ENCODE measurements at regions of chr11 and their contacts with region 1.

Region 1: GRCh38 chr11:73478738-73479347 is 102.6 kb downstream of the RELT start:
- DNase-seq: peak; percentile 26 to 54
- H3K4me3 ChIP-seq: no peak overlapping the region
- H3K27ac ChIP-seq: no peak overlapping the region
- H3K4me1 ChIP-seq: 0 out of 2 replicates have a peak, but pooled peaks cover 6% of the 10 kb centered on the region
- H3K27me3 ChIP-seq: no peaks in the 10 kb centered on the region
- CTCF ChIP-seq: peak; percentile 85

Region 2: GRCh38 chr11:73439002-73439843 is 39.6 kb before region 1 on chr11:
- CTCF ChIA-PET with region 1: interaction called, 10 read pairs
- POLR2A ChIA-PET with region 1: no interaction called
- intact Hi-C with region 1: no loop called
- DNase-seq: no peak
- H3K4me3 ChIP-seq: no peak overlapping the region
- H3K27ac ChIP-seq: no peak overlapping the region
- H3K4me1 ChIP-seq: no peaks in the 10 kb centered on the region
- H3K27me3 ChIP-seq: no peaks in the 10 kb centered on the region
- CTCF ChIP-seq: no peak

Region 3: GRCh38 chr11:73458201-73458600 is 20.6 kb before region 1 on chr11:
- CTCF ChIA-PET with region 1: interaction called, 20 read pairs
- POLR2A ChIA-PET with region 1: no interaction called
- intact Hi-C with region 1: no loop called
- DNase-seq: no peak
- H3K4me3 ChIP-seq: no peak overlapping the region
- H3K27ac ChIP-seq: no peak overlapping the region
- H3K4me1 ChIP-seq: no peaks in the 10 kb centered on the region
- H3K27me3 ChIP-seq: no peaks in the 10 kb centered on the region
- CTCF ChIP-seq: no peak

Region 4: DNA sequence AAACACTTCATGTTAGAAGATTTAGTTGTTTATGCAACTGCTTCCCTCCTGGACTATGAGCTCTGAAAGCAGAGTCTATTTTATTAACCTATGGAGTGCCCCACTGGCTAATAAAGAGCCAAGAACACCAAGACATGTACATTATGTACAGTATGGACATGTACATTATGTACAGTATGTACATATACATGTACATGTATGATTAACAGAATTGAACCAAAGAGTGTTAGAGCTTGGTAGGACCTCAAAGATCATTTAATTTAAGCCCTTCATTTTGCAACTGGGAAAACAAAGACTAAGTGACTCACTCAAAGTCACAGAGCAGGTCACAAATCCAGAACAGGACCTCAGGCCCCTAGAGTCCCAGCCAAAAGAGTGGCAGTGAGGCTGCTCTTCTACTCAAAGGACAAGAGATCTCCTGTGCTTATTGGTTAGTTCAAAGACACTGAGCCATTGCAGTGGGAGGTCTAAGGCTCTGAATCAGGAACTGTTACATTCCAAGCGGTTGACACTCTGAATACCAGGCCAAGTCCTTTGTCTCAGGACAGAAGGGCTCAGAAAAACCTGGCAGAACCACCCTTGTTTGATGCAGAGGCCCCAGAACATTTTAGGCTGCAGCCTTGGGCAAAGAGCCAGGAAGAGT is 15.2 kb after region 1 on chr11:
- CTCF ChIA-PET with region 1: interaction called, 9 read pairs
- POLR2A ChIA-PET with region 1: interaction called, 4 read pairs
- intact Hi-C with region 1: loop called (anchors 1 kb)
- DNase-seq: peak; percentile 81 to 96
- H3K4me3 ChIP-seq: no peak overlapping the region
- H3K27ac ChIP-seq: 0 out of 2 replicates have a peak overlapping the region, but pooled peaks have one; percentile 31
- H3K4me1 ChIP-seq: peaks cover 16% of the 10 kb centered on the region
- H3K27me3 ChIP-seq: no peaks in the 10 kb centered on the region
- CTCF ChIP-seq: no peak

Region 5: GRCh38 chr11:73597956-73598718 is 119.3 kb after region 1 on chr11 and contains the start of gene FAM168A:
- CTCF ChIA-PET with region 1: interaction called, 4 read pairs
- POLR2A ChIA-PET with region 1: no interaction called
- intact Hi-C with region 1: loop called (anchors 1 kb)
- DNase-seq: peak; percentile 88 to 94
- H3K4me3 ChIP-seq: peak within 1 kb of the TSS; percentile 86
- H3K27ac ChIP-seq: peak within 1 kb of the TSS; percentile 22; the same call in 1 of the 2 replicates
- H3K4me1 ChIP-seq: peaks cover 16% of the 10 kb centered on the region
- H3K27me3 ChIP-seq: no peaks in the 10 kb centered on the region
- CTCF ChIP-seq: no peak
- total RNA-seq, gene FAM168A: 38.6 and 51.2 TPM in 2 replicates

Region 6: GRCh38 chr11:73625696-73626318 is 147.0 kb after region 1 on chr11:
- CTCF ChIA-PET with region 1: interaction called, 14 read pairs
- POLR2A ChIA-PET with region 1: interaction called, 3 read pairs
- intact Hi-C with region 1: loop called (anchors 1 kb)
- DNase-seq: peak; percentile 71 to 84
- H3K4me3 ChIP-seq: no peak overlapping the region; the same call in 1 of the 2 replicates
- H3K27ac ChIP-seq: no peak overlapping the region
- H3K4me1 ChIP-seq: 0 out of 2 replicates have a peak, but pooled peaks cover 4% of the 10 kb centered on the region
- H3K27me3 ChIP-seq: 0 out of 2 replicates have a peak, but pooled peaks cover 3% of the 10 kb centered on the region
- CTCF ChIP-seq: peak; percentile 96

Region 7: DNA sequence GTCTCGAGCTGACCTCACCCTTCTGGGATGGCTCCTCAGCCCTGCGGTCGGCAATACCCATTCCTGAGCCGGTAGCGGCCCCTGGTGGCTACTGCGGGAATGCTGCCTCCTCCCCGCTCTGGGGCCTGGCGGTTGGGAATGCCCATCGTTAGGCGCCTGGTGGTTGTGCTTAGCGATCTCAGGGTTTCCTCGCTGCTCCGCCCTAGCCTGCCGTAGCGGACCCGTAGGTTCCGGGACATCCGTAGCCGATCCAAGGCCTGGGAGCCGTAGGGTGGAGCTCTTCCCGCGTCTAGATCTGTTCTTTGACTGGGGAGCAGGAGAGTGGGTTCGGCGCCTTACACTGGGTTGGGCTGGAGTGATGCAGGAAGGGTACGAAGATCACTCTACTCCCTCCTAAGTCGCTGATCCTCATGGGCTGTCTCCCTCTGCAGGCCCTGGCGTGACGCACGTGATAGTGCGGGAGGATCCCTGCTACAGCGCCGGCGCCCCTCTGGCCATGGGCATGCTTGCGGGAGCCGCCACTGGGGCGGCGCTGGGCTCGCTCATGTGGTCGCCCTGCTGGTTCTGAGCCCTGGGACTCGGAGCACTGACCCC is 182.3 kb after region 1 on chr11:
- CTCF ChIA-PET with region 1: interaction called, 17 read pairs
- POLR2A ChIA-PET with region 1: interaction called, 7 read pairs
- intact Hi-C with region 1: loop called (anchors 1 kb)
- DNase-seq: peak; percentile 50 to 87
- H3K4me3 ChIP-seq: no peak overlapping the region
- H3K27ac ChIP-seq: no peak overlapping the region
- H3K4me1 ChIP-seq: peaks cover 14% of the 10 kb centered on the region
- H3K27me3 ChIP-seq: no peaks in the 10 kb centered on the region
- CTCF ChIP-seq: peak; percentile 97

Measured in PC-9 (cell line).